GM12878 (cell line): ENCODE measurements at regions of chr17 and their contacts with region 1.

Region 1: DNA sequence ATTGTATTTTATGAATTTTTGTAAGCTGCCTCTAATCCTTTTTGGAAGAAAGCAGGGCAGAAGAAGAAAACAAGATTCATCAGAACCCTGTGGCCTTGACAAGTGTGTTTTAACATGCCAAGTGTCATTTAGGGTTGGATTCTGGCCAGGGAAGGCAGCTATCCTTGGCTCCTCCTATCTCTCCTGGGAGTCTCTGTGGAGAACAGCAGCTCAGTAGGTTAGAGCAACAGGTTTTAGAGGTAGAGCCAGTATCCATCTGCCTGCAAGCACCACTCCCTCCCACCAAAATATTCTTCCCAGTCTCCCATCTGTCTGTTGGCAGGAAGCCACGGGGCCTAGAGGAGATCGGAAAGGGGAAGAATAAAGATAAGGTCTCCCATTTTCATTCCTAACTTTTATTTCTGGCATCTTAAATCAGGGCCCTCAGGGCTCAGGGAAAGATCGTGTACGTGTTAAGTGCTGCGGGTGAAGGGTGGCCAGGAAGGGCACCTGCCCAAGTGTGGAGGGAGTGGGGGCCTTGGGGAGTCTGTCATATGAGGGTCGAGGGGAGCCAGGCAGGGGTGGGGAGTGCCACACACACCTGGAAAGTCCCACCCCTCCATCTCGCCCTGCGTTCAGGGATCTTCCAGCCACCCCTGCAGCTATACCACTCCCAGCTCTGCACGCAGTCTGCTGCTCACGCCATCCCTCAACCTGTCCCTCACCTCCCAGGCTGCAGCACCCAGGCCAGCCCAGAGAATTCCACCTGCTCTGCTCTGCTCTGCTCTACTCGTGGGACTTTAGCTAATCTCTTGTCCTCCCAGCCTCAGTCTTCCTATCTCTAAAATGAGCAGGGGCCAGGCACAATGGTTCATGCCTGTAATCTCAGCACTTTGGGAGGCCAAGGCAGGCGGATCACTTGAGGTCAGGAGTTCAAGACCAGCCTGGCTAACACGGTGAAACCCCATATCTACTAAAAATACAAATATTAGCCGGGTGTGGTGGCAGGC is 17.1 kb upstream of the CPSF4L start:
- DNase-seq: no peak
- ATAC-seq: no peak
- H3K4me3 ChIP-seq: no peak overlapping the region
- H3K27ac ChIP-seq: no peak overlapping the region
- H3K4me1 ChIP-seq: peaks cover 14% of the 10 kb centered on the region
- H3K27me3 ChIP-seq: no peaks in the 10 kb centered on the region
- CTCF ChIP-seq: no peak
- EP300 ChIP-seq: no peak
- POLR2A ChIP-seq: no peak
- RAD21 ChIP-seq: no peak

Region 2: GRCh38 chr17:73039282-73039681 is 239.5 kb before region 1 on chr17:
- CTCF ChIA-PET with region 1: no interaction called
- POLR2A ChIA-PET with region 1: no interaction called
- RAD21 ChIA-PET with region 1: no interaction called
- SMC1A ChIA-PET with region 1: no interaction called
- in situ Hi-C with region 1: no loop called
- intact Hi-C with region 1: no loop called
- DNase-seq: no peak
- ATAC-seq: no peak
- H3K4me3 ChIP-seq: no peak overlapping the region
- H3K27ac ChIP-seq: no peak overlapping the region
- H3K4me1 ChIP-seq: peaks cover 7% of the 10 kb centered on the region
- H3K27me3 ChIP-seq: no peaks in the 10 kb centered on the region
- CTCF ChIP-seq: no peak
- EP300 ChIP-seq: no peak
- POLR2A ChIP-seq: no peak
- RAD21 ChIP-seq: no peak

Region 3: GRCh38 chr17:73291260-73291801 is 12.6 kb after region 1 on chr17:
- CTCF ChIA-PET with region 1: interaction called, 9 read pairs
- POLR2A ChIA-PET with region 1: interaction called, 18 read pairs
- RAD21 ChIA-PET with region 1: interaction called, 12 read pairs
- SMC1A ChIA-PET with region 1: interaction called, 21 read pairs
- in situ Hi-C with region 1: no loop called
- intact Hi-C with region 1: no loop called
- DNase-seq: peak; percentile 70
- ATAC-seq: peak; percentile 95
- H3K4me3 ChIP-seq: peak overlapping the region; percentile 59; the same call in 1 of the 2 replicates
- H3K27ac ChIP-seq: peak overlapping the region; percentile 87
- H3K4me1 ChIP-seq: peaks cover 27% of the 10 kb centered on the region
- H3K27me3 ChIP-seq: no peaks in the 10 kb centered on the region
- CTCF ChIP-seq: no peak
- EP300 ChIP-seq: peak in 1 of 2 experiments; percentile 45; a peak in 2 of 4 replicates
- POLR2A ChIP-seq: no peak
- RAD21 ChIP-seq: no peak

Region 4: GRCh38 chr17:73297934-73298861 is 19.4 kb after region 1 on chr17:
- CTCF ChIA-PET with region 1: interaction called, 8 read pairs
- POLR2A ChIA-PET with region 1: interaction called, 10 read pairs
- RAD21 ChIA-PET with region 1: interaction called, 21 read pairs
- SMC1A ChIA-PET with region 1: interaction called, 10 read pairs
- in situ Hi-C with region 1: no loop called
- intact Hi-C with region 1: no loop called
- DNase-seq: no peak
- ATAC-seq: peak; percentile 91
- H3K4me3 ChIP-seq: peak overlapping the region; percentile 14; the same call in 1 of the 2 replicates
- H3K27ac ChIP-seq: peak overlapping the region; percentile 37
- H3K4me1 ChIP-seq: peaks cover 9% of the 10 kb centered on the region
- H3K27me3 ChIP-seq: no peaks in the 10 kb centered on the region
- CTCF ChIP-seq: no peak
- EP300 ChIP-seq: no peak
- POLR2A ChIP-seq: no peak
- RAD21 ChIP-seq: no peak

Region 5: GRCh38 chr17:73316919-73317505 is 38.3 kb after region 1 on chr17:
- CTCF ChIA-PET with region 1: no interaction called
- POLR2A ChIA-PET with region 1: interaction called, 20 read pairs
- RAD21 ChIA-PET with region 1: interaction called, 27 read pairs
- SMC1A ChIA-PET with region 1: interaction called, 29 read pairs
- in situ Hi-C with region 1: no loop called
- intact Hi-C with region 1: loop called (anchors 1 kb)
- DNase-seq: peak; percentile 70
- ATAC-seq: peak; percentile 85
- H3K4me3 ChIP-seq: no peak overlapping the region
- H3K27ac ChIP-seq: no peak overlapping the region; the same call in 1 of the 2 replicates
- H3K4me1 ChIP-seq: peaks cover 12% of the 10 kb centered on the region
- H3K27me3 ChIP-seq: no peaks in the 10 kb centered on the region
- CTCF ChIP-seq: no peak
- EP300 ChIP-seq: no peak
- POLR2A ChIP-seq: no peak
- RAD21 ChIP-seq: no peak

Region 6: DNA sequence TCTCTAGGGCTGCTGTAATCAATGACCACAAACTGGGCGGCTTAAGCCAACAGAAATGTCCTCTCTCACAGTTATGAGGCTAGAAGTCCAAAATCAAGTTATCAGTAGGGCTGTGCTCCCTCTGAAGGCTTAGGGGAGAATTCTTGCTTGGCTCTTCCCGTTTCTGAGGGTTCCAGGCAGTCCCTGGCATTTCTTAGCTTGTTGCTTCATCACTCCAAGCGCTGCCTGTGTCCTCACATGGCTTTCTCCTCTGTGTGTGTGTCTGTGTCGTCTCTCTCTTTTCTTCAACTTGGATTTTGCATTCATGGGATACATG is 46.7 kb after region 1 on chr17:
- CTCF ChIA-PET with region 1: no interaction called
- POLR2A ChIA-PET with region 1: no interaction called
- RAD21 ChIA-PET with region 1: no interaction called
- SMC1A ChIA-PET with region 1: interaction called, 3 read pairs
- in situ Hi-C with region 1: loop called (anchors 5 kb)
- intact Hi-C with region 1: no loop called
- DNase-seq: no peak
- ATAC-seq: no peak
- H3K4me3 ChIP-seq: no peak overlapping the region
- H3K27ac ChIP-seq: no peak overlapping the region
- H3K4me1 ChIP-seq: no peaks in the 10 kb centered on the region
- H3K27me3 ChIP-seq: no peaks in the 10 kb centered on the region
- CTCF ChIP-seq: no peak
- EP300 ChIP-seq: no peak
- POLR2A ChIP-seq: no peak
- RAD21 ChIP-seq: no peak

Region 7: DNA sequence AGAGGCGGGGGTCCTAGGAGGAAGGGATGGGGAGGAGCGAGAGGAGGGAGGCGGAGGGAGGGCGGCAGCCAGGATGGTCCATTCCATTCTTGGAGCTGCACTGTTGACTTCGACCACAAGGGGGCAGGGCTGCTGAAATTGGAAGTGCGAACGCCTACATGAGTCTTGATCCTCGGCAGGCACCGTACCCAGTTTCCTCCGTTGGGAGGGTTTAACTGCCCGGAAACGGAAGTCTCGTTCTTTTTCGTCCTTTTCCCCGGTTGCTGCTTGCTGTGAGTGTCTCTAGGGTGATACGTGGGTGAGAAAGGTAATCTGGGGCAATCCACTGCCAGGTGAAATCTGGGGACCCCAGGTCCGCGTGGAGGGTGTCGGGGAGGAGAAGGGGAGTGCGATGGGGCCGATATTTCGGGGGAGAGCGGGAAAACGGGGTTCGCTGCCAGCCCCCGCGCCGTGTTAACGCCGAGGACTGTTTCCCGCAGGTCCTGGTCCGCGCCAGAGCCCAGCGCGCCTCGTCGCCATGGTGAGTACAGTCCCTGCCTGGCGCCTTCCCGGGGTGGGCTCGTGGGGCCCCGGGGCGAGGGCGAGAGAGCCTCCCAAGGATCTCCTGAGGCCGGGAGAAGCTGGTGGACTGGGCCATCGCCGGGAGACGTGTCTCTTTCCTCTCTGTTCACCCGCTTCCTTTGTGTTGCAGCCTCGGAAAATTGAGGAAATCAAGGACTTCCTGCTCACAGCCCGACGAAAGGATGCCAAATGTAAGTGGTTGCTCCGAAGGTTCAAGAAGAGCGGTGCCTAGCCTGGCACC is 924.9 kb after region 1 on chr17 and contains the start of gene RPL38:
- CTCF ChIA-PET with region 1: no interaction called
- POLR2A ChIA-PET with region 1: no interaction called
- RAD21 ChIA-PET with region 1: no interaction called
- SMC1A ChIA-PET with region 1: no interaction called
- in situ Hi-C with region 1: loop called (anchors 10 kb)
- intact Hi-C with region 1: no loop called
- DNase-seq: peak; percentile 91
- ATAC-seq: peak; percentile 80
- H3K4me3 ChIP-seq: peak within 1 kb of the TSS; percentile 99
- H3K27ac ChIP-seq: peak within 1 kb of the TSS; percentile 90
- H3K4me1 ChIP-seq: peaks cover 10% of the 10 kb centered on the region
- H3K27me3 ChIP-seq: peaks cover 0 to 7% of the 10 kb centered on the region in 2 experiments; a peak in 3 of 4 replicates
- CTCF ChIP-seq: peak; percentile 93 to 97 (median 96); a peak in 5 of 6 replicates
- EP300 ChIP-seq: 0 out of 4 replicates have a peak, but pooled peaks of 1 of the 2 experiments have one; percentile 34
- POLR2A ChIP-seq: peak; percentile 100
- RAD21 ChIP-seq: peak; percentile 30; the same call in 1 of the 2 replicates
- polyA plus RNA-seq, gene RPL38: 2,918 to 3,855 TPM